Activated CD4-positive, alpha-beta T cell treated with anti-CD3 and anti-CD28 coated beads, Interleukin-2, amount 10 ng/mL, durations not matched to agents 24 days and 14 days (primary cell): ENCODE measurements at regions of chr12 and their contacts with region 1.

Region 1: GRCh38 chr12:54398995-54399793 is 14.7 kb upstream of the ZNF385A start:
- DNase-seq: peak; percentile 96
- H3K4me3 Mint-ChIP-seq: no peak overlapping the region
- H3K27ac Mint-ChIP-seq: no peak overlapping the region
- H3K4me1 Mint-ChIP-seq: peaks cover 8% of the 10 kb centered on the region
- H3K27me3 Mint-ChIP-seq: no peaks in the 10 kb centered on the region

Region 2: GRCh38 chr12:54379401-54380201 is 19.6 kb before region 1 on chr12:
- intact Hi-C with region 1: loop called (anchors 2 kb)
- DNase-seq: peak; percentile 97
- H3K4me3 Mint-ChIP-seq: peak overlapping the region; percentile 75
- H3K27ac Mint-ChIP-seq: peak overlapping the region; percentile 34
- H3K4me1 Mint-ChIP-seq: peaks cover 20% of the 10 kb centered on the region
- H3K27me3 Mint-ChIP-seq: peaks cover 8% of the 10 kb centered on the region

Region 3: GRCh38 chr12:54439521-54440255 is 40.5 kb after region 1 on chr12:
- intact Hi-C with region 1: loop called (anchors 1 kb)
- DNase-seq: peak; percentile 69
- H3K4me3 Mint-ChIP-seq: no peak overlapping the region
- H3K27ac Mint-ChIP-seq: no peak overlapping the region
- H3K4me1 Mint-ChIP-seq: peaks cover 9% of the 10 kb centered on the region
- H3K27me3 Mint-ChIP-seq: peaks cover 16% of the 10 kb centered on the region